ENCODE measurements at regions of chr12 and their contacts with region 1.

Region 1: DNA sequence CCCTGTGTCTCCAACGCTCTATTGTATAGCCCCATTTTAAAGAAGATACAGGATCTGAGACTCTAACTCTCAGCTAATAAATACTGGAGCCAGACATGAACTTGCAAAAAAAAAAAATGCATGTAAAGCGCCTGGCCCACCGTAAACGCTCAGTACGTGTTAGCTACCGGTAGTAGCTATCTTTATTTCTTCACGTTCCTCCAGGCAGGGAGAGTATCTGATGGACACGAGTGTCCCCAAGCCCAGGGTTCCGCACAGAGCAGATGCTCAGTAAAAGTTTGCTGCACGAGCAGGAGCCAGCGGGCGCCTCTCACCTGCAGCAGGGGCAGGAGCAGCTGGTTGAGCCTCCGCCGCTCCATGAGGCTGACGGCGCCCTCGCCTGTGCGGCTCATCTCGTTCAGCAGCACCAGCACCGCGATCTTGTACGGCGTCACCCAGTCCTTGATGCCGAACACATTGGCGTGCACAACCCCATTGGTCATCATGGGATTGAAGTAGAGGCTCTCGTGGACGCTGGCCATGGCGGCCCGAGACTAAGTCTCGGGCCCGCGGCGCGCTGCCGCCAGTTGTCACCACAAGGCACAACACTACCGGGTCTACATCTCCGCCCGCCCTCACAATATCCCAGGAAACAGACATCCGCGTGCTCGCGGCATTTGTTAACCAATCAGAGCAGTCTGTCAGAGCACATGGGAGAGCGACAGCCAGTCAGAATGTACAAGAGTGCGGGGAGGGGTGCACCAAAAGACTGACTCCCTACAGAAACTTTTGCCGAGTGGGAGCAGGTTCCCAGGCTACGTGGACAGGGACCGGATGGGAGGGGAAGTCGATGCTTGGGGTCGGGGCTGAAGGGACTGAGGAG is at the start of gene ANAPC5:
- DNase-seq: peak; percentile 94 to 97
- ATAC-seq: peak; percentile 99 to 100 (median 100)
- H3K4me3 ChIP-seq: peak within 1 kb of the TSS; percentile 83
- H3K27ac ChIP-seq: peak within 1 kb of the TSS; percentile 86
- H3K4me1 ChIP-seq: peaks cover 23% of the 10 kb centered on the region
- H3K27me3 ChIP-seq: no peaks in the 10 kb centered on the region
- CTCF ChIP-seq: no peak
- total RNA-seq, gene ANAPC5: 59.1 to 80.3 (median 71.6) TPM

Region 2: GRCh38 chr12:121296618-121297434 is 55.2 kb before region 1 on chr12 and contains the start of gene CAMKK2:
- intact Hi-C with region 1: loop called in 1 of 2 experiments (anchors 5 kb)
- DNase-seq: peak; percentile 90 to 91
- ATAC-seq: peak; percentile 94 to 96 (median 96)
- H3K4me3 ChIP-seq: peak within 1 kb of the TSS; percentile 99
- H3K27ac ChIP-seq: peak within 1 kb of the TSS; percentile 82
- H3K4me1 ChIP-seq: peaks cover 22% of the 10 kb centered on the region
- H3K27me3 ChIP-seq: no peaks in the 10 kb centered on the region
- CTCF ChIP-seq: peak; percentile 20
- total RNA-seq, gene CAMKK2: 6.8 to 12.3 (median 10.4) TPM

Region 3: DNA sequence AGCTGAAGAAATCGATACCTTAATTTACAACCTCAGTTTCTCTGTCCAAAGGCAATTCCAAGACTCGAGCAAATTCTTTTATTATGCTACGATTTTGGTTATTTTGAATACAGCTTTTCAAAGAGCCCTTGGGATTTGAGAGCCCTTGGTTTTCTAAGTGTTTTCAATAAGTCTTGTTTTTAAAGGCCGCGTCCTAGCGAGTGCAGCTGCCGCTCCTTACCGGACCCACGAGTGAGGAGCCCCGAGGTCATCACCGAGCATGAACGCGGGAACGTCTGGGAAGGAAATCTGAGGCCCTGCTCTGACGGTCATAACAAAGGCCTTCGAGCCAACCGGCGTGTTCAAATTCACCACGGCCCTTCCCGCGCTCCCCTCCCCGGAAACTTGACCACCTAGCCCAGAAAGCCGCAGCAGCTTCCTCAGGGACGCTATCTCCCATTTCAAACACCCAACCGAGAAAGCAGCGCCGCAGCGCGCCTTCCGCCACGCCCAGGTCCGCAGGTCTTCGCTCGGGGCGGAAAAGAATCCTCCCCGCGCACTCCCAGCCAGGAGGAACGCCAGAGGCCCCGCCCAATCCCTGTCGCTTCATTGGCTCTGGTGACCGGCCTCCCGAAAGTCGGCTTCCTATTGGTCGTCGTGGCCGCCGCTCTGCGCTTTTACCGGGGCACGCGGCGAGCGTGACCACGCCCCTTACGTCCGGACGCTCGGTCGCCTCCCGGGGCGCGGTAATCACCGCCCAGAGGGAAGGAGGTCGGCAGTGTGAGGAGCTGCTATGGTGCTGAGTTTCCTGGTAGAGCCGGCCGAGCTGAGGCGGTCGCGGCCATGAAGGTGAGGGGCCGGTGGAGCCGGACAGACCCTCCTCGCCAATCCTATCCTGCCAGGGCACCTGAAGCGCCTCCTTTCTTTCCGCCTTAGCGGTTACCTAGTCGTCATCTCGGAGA is 47.6 kb after region 1 on chr12 and contains the start of gene RNF34:
- intact Hi-C with region 1: loop called (anchors 2 to 5 kb)
- DNase-seq: peak; percentile 99 to 100
- ATAC-seq: peak; percentile 96 to 99 (median 98)
- H3K4me3 ChIP-seq: peak within 1 kb of the TSS; percentile 97
- H3K27ac ChIP-seq: peak within 1 kb of the TSS; percentile 99
- H3K4me1 ChIP-seq: peaks cover 41% of the 10 kb centered on the region
- H3K27me3 ChIP-seq: no peaks in the 10 kb centered on the region
- CTCF ChIP-seq: no peak
- total RNA-seq, gene RNF34: 21.3 to 53.3 (median 47.4) TPM

Measured in psoas muscle (tissue), 8 donors.